Right cardiac atrium (tissue), 5 donors: ENCODE measurements at regions of chr9 and their contacts with region 1.

Region 1: DNA sequence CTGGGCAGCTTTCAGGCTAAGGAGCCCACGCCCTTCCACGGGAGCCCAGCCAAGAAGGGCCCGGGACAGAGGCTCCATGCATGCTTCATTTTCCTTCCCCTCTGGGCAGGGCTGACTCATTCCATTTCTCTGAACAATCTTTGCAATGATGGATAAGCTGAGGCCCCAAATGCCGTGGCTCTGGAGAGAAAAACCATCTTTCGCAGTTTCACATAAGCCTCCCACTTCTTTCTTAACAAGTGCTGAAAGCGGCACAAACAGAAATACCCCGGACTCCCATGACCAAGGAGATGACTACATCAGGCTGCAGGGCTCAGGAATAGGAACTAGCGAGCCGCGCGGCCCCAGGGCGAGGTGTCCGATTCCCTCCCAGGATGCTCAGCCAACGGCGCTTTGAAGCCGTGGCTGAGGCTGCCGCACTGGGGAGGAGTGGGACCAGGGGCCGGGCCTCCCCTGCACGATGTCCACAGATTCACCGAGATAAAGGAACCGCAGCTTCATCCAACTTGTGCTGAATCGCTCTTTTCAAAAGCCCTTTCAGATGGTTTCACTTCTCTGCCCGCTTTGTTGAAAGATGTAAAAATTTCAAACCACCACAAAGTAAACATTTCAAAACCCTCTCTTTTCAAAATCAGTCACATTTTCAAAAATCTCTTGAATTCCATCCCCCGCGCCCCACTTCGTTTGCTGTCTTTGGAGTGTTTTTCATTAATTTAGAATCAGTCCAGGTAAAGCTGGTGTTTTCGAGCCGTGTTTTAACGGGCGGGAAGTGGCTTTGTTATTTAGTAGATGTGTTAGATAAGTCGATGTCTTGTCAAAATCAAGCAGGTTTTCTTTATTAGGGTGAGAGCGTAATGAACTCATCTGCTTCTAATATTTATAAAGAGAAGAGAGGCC is 96.5 kb upstream of the LMX1B start:
- DNase-seq: peak; percentile 88 to 94 (median 92)
- ATAC-seq: peak; percentile 84
- H3K4me3 ChIP-seq: peak overlapping the region; percentile 15
- H3K27ac ChIP-seq: peak overlapping the region; percentile 73
- H3K4me1 ChIP-seq: no peaks in the 10 kb centered on the region
- H3K27me3 ChIP-seq: no peaks in the 10 kb centered on the region

Region 2: DNA sequence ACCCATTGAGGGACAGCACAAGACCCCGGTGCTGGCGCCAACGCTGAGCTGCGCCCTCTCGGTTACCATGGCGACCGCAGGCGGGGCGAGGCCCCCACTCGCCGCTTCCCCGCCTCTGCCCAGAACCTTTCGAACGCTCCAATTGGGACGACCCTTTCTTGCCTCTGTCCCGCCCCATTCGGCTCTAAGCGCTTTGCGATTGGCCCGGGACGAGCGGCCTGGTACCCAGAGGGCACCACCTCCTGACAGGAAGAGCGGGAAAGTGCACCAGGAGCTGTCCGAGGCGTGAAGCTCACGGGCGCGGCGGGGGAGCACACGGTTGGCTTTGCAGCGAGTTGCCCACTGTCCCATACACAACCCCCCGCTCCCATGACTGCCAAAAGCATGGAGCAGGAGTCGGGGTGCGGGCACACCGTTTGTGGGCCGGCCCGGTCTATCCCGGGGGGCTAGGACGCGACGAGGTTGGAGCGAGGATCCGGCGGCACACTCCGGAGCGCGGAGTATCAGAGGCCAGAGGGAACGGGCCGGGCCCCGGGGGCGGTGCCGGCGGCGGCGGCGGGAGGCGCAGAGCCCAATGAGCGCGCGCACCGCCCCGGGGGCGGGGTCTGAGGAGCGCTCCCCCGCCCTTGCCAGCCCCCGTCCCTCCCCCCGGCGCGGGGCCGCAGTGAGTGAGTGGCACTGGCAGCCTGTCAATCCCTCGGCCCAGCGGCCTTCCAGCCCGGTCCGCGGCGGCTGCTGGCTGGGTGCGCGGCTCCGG is 771.0 kb before region 1 on chr9:
- intact Hi-C with region 1: no loop called
- DNase-seq: peak; percentile 96 to 98 (median 98)
- ATAC-seq: peak; percentile 97
- H3K4me3 ChIP-seq: peak overlapping the region; percentile 82
- H3K27ac ChIP-seq: peak overlapping the region; percentile 88
- H3K4me1 ChIP-seq: no peaks in the 10 kb centered on the region
- H3K27me3 ChIP-seq: no peaks in the 10 kb centered on the region

Region 3: GRCh38 chr9:126549246-126550006 is 32.2 kb after region 1 on chr9:
- intact Hi-C with region 1: loop called in 1 of 4 experiments (anchors 5 kb)
- DNase-seq: no peak
- ATAC-seq: no peak
- H3K4me3 ChIP-seq: no peak overlapping the region
- H3K27ac ChIP-seq: no peak overlapping the region
- H3K4me1 ChIP-seq: no peaks in the 10 kb centered on the region
- H3K27me3 ChIP-seq: no peaks in the 10 kb centered on the region